ENCODE measurements at regions of chr4 and their contacts with region 1.

Region 1: GRCh38 chr4:4488405-4489404 is 53.1 kb downstream of the STX18 start:
- DNase-seq: peak; percentile 86
- ATAC-seq: peak; percentile 90
- H3K4me3 Mint-ChIP-seq: no peak overlapping the region
- H3K27ac Mint-ChIP-seq: no peak overlapping the region
- H3K4me1 Mint-ChIP-seq: peaks cover 7% of the 10 kb centered on the region
- H3K27me3 Mint-ChIP-seq: no peaks in the 10 kb centered on the region
- CTCF ChIP-seq: peak; percentile 86

Region 2: DNA sequence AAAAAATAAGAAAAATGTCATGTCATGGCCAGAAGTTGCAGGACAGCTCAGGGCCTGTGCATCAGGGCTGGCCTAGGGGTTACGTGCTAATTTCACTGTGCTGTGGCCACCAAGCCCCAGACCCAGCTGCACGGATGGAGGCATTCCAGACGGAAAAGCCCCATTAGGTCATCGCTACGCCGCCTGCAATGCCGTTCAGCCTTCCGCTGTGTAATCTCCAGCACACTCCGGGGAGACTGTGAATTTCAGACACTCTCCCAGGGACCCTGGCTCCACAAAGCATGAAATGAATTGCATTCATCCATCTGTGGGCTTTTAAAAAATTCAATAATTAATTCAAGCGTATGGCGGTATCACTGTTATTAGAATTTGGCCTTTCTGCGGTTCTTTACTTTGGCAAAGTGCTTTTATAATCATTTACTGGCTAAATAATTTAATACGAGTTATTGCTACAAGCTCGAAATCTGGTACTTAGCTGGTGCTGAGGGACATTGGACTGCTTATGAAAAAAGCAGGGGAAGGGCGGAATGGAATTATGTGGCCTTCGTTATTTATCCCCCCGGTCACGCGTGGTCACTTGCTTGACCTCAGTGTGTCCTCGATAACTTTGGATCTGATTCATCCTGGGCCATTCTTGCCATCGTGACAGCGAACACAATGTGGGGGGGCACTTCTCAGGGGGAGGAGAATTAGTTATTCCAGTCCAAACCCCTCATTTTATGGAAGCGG is 110.8 kb before region 1 on chr4:
- CTCF ChIA-PET with region 1: no interaction called
- POLR2A ChIA-PET with region 1: no interaction called
- intact Hi-C with region 1: no loop called
- DNase-seq: no peak
- ATAC-seq: no peak
- H3K4me3 Mint-ChIP-seq: no peak overlapping the region
- H3K27ac Mint-ChIP-seq: no peak overlapping the region
- H3K4me1 Mint-ChIP-seq: no peaks in the 10 kb centered on the region
- H3K27me3 Mint-ChIP-seq: no peaks in the 10 kb centered on the region
- CTCF ChIP-seq: no peak

Region 3: GRCh38 chr4:4477391-4477790 is 11.3 kb before region 1 on chr4:
- CTCF ChIA-PET with region 1: interaction called, 11 read pairs
- POLR2A ChIA-PET with region 1: no interaction called
- intact Hi-C with region 1: no loop called
- DNase-seq: no peak
- ATAC-seq: no peak
- H3K4me3 Mint-ChIP-seq: no peak overlapping the region
- H3K27ac Mint-ChIP-seq: no peak overlapping the region
- H3K4me1 Mint-ChIP-seq: peaks cover 7% of the 10 kb centered on the region
- H3K27me3 Mint-ChIP-seq: no peaks in the 10 kb centered on the region
- CTCF ChIP-seq: no peak

Region 4: GRCh38 chr4:4575273-4576211 is 86.8 kb after region 1 on chr4:
- CTCF ChIA-PET with region 1: interaction called, 18 read pairs
- POLR2A ChIA-PET with region 1: no interaction called
- intact Hi-C with region 1: no loop called
- DNase-seq: peak; percentile 60
- ATAC-seq: peak; percentile 90
- H3K4me3 Mint-ChIP-seq: peak overlapping the region; percentile 61
- H3K27ac Mint-ChIP-seq: no peak overlapping the region
- H3K4me1 Mint-ChIP-seq: peaks cover 11% of the 10 kb centered on the region
- H3K27me3 Mint-ChIP-seq: peaks cover 4% of the 10 kb centered on the region
- CTCF ChIP-seq: peak; percentile 64

Region 5: DNA sequence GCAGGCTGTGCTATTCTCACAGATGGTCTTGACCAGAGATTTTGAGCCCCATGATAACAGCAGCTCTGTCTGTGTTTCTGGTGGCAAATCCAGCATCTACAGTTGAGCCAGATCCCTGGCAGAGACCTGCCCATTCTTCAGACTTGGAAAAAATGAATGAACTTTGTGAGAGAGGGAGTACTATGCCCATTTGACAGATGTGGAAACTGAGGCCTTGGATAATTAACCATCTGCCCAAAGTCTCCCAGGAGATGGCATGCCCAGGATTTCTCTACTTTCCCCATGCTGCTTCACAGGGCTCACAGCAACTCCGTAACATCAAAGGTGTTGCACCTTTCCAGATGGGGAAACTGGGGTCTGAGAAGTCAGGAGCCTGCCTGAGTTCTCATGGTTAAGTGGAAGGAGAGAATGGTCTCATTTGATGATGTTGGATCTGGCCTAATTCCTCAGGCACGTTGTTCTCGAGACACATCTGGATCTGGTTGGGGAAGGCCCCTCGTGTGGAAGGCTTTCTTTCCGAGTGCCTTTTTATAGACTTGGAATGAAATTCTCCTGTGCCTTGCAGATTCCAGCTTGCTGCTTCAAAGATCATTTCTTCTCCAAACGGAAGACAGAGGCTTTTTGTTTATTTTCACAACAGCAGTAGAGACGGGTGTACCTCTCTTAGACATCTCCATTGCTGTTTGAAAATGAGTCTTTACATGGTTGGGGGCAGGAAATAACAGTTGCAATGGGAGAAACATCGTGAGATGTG is 126.4 kb after region 1 on chr4:
- CTCF ChIA-PET with region 1: no interaction called
- POLR2A ChIA-PET with region 1: no interaction called
- intact Hi-C with region 1: no loop called
- DNase-seq: no peak
- ATAC-seq: no peak
- H3K4me3 Mint-ChIP-seq: no peak overlapping the region
- H3K27ac Mint-ChIP-seq: no peak overlapping the region
- H3K4me1 Mint-ChIP-seq: no peaks in the 10 kb centered on the region
- H3K27me3 Mint-ChIP-seq: no peaks in the 10 kb centered on the region
- CTCF ChIP-seq: no peak

Region 6: DNA sequence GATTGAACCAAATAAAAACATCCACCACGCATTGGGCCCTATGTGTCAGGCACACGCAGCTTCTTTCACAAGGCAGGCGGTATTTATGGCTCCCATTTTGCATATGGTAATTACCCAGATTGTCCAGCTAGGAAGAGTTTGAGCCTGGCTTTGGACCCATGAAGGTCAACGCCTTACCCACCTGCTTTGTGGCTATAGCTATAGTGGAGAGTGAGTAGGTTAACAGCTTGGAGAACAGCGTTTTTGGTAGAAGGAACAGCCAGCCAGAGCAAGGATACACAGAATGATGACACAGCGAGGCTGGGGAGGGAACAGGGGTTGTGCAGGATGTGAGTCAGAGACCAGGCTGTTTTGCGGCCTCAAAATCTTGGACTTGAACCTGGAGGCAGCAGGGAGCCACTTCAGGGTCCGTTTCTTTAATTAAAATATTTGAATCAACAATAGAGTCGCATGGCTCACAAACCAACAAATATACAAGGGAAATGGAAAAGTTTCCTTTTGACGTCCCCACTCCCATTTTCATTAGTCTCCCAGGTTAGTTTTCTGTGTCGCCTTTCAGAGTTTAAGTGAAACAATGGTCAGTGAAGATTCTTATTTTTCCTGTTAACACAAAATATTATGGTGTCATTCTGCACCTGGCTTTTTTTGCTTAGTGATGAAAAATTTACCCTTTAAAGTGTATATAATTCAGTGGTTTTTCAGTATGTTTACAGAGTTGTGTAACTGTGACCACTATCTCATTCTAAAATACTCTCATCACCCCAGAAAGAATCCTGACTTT is 171.4 kb after region 1 on chr4:
- CTCF ChIA-PET with region 1: no interaction called
- POLR2A ChIA-PET with region 1: no interaction called
- intact Hi-C with region 1: no loop called
- DNase-seq: no peak
- ATAC-seq: no peak
- H3K4me3 Mint-ChIP-seq: no peak overlapping the region
- H3K27ac Mint-ChIP-seq: no peak overlapping the region
- H3K4me1 Mint-ChIP-seq: peaks cover 2% of the 10 kb centered on the region
- H3K27me3 Mint-ChIP-seq: no peaks in the 10 kb centered on the region
- CTCF ChIP-seq: no peak

Region 7: GRCh38 chr4:4714331-4714730 is 225.6 kb after region 1 on chr4:
- CTCF ChIA-PET with region 1: no interaction called
- POLR2A ChIA-PET with region 1: no interaction called
- intact Hi-C with region 1: no loop called
- DNase-seq: no peak
- ATAC-seq: no peak
- H3K4me3 Mint-ChIP-seq: no peak overlapping the region
- H3K27ac Mint-ChIP-seq: no peak overlapping the region
- H3K4me1 Mint-ChIP-seq: no peaks in the 10 kb centered on the region
- H3K27me3 Mint-ChIP-seq: no peaks in the 10 kb centered on the region
- CTCF ChIP-seq: no peak

Region 8: GRCh38 chr4:4859390-4859842 is 370.7 kb after region 1 on chr4 and contains the start of gene MSX1:
- CTCF ChIA-PET with region 1: no interaction called
- POLR2A ChIA-PET with region 1: no interaction called
- intact Hi-C with region 1: loop called (anchors 5 kb)
- DNase-seq: peak; percentile 71
- ATAC-seq: peak; percentile 86
- H3K4me3 Mint-ChIP-seq: peak within 1 kb of the TSS; percentile 66
- H3K27ac Mint-ChIP-seq: no peak within 1 kb of the TSS
- H3K4me1 Mint-ChIP-seq: peaks cover 41% of the 10 kb centered on the region
- H3K27me3 Mint-ChIP-seq: peaks cover 77% of the 10 kb centered on the region
- CTCF ChIP-seq: no peak
- total RNA-seq, gene MSX1: 0.16 to 0.61 TPM